ENCODE measurements at regions of chr9 and their contacts with region 1.

Region 1: DNA sequence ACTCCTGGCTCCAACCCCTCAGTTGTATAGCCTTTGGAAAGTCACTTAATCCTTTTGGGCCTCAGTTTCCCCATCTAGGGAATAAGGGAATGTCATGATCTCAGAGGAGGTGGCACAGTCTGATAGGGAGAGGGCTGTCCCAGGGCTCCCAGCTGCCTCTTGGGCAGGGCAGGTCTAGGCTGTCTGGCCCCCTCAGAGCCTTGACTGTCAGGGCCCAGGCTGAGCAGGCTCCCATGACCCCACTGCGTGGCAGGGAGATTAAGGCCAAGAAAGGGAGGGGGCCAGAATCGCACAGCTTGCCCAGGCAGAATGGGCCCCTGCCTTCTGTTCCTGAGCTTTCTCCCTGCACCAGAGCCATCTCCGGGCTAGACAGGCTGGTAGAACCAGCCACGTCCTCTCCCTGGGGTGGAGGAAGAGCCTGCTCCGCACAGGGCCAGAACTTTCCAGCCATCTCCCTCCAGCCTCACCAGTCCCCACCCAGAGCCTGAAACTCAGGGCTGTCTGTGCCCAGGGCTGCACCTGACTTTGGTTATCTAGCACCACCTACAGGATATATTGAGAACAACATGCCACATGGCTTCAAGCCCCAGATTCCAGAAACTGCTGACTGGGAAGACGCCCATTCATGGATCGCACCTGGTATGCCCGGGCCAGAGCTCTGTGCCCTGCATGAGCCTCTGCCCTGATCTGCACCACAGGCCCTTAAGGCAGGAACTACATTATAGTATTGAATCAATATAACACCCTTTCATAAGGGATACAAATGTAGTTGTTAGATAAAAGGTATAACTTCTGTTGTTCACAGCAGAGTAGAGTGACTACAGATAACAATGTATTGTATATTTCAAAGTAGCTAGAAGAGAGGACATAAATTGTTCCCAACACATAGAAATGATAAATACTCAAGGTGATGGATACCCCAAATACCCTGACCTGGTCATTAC is 32.0 kb downstream of the NAIF1 start:
- DNase-seq: peak; percentile 81
- ATAC-seq: peak; percentile 57
- H3K4me3 Mint-ChIP-seq: no peak overlapping the region
- H3K27ac Mint-ChIP-seq: peak overlapping the region; percentile 43
- H3K4me1 Mint-ChIP-seq: peaks cover 40% of the 10 kb centered on the region
- H3K27me3 Mint-ChIP-seq: peaks cover 5% of the 10 kb centered on the region

Region 2: DNA sequence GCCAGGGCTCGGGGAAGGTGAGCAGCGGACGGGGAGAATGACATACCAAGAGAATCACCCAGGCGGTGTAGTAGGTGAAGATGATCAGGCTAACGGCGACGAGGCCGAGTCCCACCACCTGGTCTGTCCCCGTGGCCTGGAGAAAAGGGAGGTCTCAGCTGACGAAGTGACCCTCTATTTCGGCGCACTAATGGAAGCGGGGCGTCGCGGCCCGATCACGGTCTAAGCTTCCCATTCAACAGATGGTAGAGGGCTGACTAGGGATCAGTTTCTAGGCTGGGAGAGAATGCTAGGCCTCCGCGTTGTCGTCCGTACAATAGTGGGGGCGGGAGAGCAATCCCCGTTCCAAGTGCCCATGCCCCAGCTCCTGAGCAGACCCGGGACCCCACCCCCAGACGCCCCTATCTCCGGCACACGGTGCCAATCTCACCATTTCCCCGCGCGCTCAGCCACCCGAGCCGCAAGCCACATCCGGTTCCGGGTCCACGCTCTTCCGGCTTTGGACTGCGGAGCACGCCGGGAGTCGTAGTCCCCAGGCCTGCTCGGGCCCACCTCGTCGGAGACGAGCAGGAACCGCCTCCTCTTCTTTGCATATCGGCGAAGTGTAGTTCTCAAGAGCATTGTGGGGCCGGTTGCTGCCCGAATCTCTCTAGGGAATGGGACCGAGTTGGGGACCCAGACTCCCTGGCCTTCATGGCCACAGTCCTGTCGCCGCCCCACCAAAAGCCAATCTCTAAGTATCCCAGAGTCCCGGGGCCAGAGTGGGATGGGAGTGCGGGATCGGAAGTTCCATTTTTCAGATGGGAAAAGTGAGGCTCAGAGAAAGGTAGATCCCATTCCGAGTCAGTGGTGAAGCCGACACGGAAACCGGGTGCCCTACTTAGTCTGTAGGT is 97.5 kb before region 1 on chr9 and contains the start of gene DPM2:
- CTCF ChIA-PET with region 1: interaction called, 347 read pairs
- DNase-seq: peak; percentile 93
- ATAC-seq: peak; percentile 93
- H3K4me3 Mint-ChIP-seq: peak within 1 kb of the TSS; percentile 87
- H3K27ac Mint-ChIP-seq: peak within 1 kb of the TSS; percentile 88
- H3K4me1 Mint-ChIP-seq: peaks cover 33% of the 10 kb centered on the region
- H3K27me3 Mint-ChIP-seq: peaks cover 2% of the 10 kb centered on the region
- total RNA-seq, gene DPM2: 51.4 to 53.5 TPM

Region 3: GRCh38 chr9:127963359-127964064 is 71.6 kb before region 1 on chr9:
- CTCF ChIA-PET with region 1: interaction called, 90 read pairs
- DNase-seq: no peak
- ATAC-seq: no peak
- H3K4me3 Mint-ChIP-seq: no peak overlapping the region
- H3K27ac Mint-ChIP-seq: no peak overlapping the region
- H3K4me1 Mint-ChIP-seq: peaks cover 76% of the 10 kb centered on the region
- H3K27me3 Mint-ChIP-seq: no peaks in the 10 kb centered on the region

Region 4: GRCh38 chr9:127980706-127981558 is 54.2 kb before region 1 on chr9 and contains the start of gene EEIG1:
- CTCF ChIA-PET with region 1: interaction called, 42 read pairs
- DNase-seq: peak; percentile 96
- ATAC-seq: peak; percentile 93
- H3K4me3 Mint-ChIP-seq: peak within 1 kb of the TSS; percentile 97
- H3K27ac Mint-ChIP-seq: peak within 1 kb of the TSS; percentile 91
- H3K4me1 Mint-ChIP-seq: peaks cover 52% of the 10 kb centered on the region
- H3K27me3 Mint-ChIP-seq: no peaks in the 10 kb centered on the region
- total RNA-seq, gene EEIG1: 60.8 to 116 TPM

Region 5: DNA sequence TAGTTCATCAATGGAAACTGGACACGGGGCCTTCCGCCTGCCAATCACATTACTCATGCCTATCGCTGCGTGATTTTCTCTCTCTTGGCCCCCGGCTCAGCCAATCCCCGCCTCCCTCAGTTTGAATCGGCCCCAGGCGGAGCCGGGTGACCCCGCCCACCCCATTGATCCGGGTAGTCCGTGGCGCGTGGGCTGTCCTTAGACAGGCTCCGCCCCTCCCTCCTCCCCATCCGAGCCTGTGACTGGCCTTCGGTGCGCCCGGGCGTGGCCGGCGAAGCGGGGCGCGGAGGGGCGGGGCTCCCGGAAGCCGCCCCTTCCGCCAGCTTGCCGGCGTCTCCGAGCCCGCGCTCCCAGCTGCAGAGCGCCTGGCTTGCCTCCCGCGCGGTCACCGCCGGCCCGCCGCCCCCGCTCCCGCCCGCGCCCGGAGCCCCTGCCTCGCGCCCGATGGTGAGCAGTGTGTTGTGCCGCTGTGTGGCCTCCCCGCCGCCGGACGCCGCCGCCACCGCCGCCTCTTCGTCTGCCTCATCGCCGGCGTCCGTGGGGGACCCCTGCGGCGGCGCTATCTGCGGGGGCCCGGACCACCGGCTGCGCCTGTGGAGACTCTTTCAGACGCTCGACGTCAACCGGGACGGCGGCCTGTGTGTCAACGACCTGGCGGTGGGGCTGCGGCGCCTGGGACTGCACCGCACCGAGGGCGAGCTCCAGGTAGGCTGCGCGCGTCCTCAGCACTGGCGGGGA is 33.0 kb after region 1 on chr9 and contains the start of gene SLC25A25:
- CTCF ChIA-PET with region 1: interaction called, 18 read pairs
- DNase-seq: peak; percentile 100
- ATAC-seq: peak; percentile 84
- H3K4me3 Mint-ChIP-seq: no peak within 1 kb of the TSS
- H3K27ac Mint-ChIP-seq: peak within 1 kb of the TSS; percentile 86
- H3K4me1 Mint-ChIP-seq: peaks cover 45% of the 10 kb centered on the region
- H3K27me3 Mint-ChIP-seq: no peaks in the 10 kb centered on the region
- total RNA-seq, gene SLC25A25: 16.5 to 18.1 TPM

Region 6: DNA sequence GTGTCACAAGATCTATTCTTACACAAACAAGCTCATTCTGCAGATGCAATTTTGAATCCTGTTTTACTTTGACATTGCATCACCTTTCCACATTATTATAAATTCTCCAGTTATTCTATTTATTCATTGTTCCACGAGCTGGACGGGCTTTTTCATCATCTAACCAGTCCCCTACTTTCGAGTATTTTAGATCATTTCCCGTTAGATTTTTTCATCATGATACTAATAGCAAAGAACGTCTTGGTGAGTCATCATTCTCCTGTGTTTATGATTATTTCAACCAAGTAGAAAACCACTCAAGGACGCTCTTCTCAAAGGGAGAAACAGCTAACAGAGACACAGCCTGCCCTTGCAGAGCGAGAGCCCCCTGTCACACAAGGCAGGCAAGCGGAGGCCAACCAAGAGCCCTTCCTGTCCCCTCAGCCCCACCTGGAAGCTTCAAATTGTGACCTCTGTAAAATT is 140.0 kb after region 1 on chr9:
- CTCF ChIA-PET with region 1: no interaction called
- DNase-seq: no peak
- ATAC-seq: no peak
- H3K4me3 Mint-ChIP-seq: no peak overlapping the region
- H3K27ac Mint-ChIP-seq: no peak overlapping the region
- H3K4me1 Mint-ChIP-seq: no peaks in the 10 kb centered on the region
- H3K27me3 Mint-ChIP-seq: no peaks in the 10 kb centered on the region

Region 7: GRCh38 chr9:128231638-128232527 is 196.8 kb after region 1 on chr9:
- CTCF ChIA-PET with region 1: no interaction called
- DNase-seq: no peak
- ATAC-seq: no peak
- H3K4me3 Mint-ChIP-seq: no peak overlapping the region
- H3K27ac Mint-ChIP-seq: no peak overlapping the region
- H3K4me1 Mint-ChIP-seq: no peaks in the 10 kb centered on the region
- H3K27me3 Mint-ChIP-seq: peaks cover 4% of the 10 kb centered on the region